ENCODE measurements at regions of chr2 and their contacts with region 1.

Region 1: GRCh38 chr2:153519257-153519875 is 40.8 kb upstream of the RPRM start:
- DNase-seq: no peak
- ATAC-seq: no peak
- H3K4me3 ChIP-seq: no peak overlapping the region
- H3K27ac ChIP-seq: no peak overlapping the region
- H3K4me1 ChIP-seq: no peaks in the 10 kb centered on the region
- H3K27me3 ChIP-seq: no peaks in the 10 kb centered on the region
- CTCF ChIP-seq: peak; percentile 71; the same call in 1 of the 2 replicates

Region 2: DNA sequence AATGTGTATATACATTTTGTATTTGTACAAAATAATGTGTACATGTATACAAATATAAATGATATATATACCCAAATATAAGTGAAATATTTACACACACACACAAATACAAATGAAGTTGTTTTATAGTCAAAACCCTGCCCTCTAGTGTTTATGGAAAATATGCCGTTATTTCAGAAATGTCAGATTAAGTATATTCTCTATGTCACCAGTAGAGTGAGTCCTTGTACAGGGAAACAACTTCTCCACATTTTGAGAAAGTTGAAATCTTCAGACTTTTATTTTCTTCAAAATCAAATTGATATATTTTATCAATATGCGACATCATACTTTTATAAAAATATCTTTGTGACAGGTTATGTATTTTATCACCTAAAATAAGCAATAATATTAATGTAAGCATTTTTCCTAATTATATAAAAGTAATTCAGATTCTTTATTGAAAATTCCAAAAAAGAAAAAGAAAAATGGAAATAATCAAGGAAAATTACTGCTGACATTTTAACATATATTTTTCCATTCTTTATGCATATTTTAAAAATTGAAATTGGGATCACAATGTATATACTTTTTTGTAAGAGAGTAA is 778.5 kb before region 1 on chr2:
- CTCF ChIA-PET with region 1: no interaction called
- POLR2A ChIA-PET with region 1: no interaction called
- in situ Hi-C with region 1: no loop called
- intact Hi-C with region 1: loop called (anchors 5 kb)
- DNase-seq: peak; percentile 42
- ATAC-seq: no peak
- H3K4me3 ChIP-seq: no peak overlapping the region
- H3K27ac ChIP-seq: no peak overlapping the region
- H3K4me1 ChIP-seq: no peaks in the 10 kb centered on the region
- H3K27me3 ChIP-seq: no peaks in the 10 kb centered on the region
- CTCF ChIP-seq: peak; percentile 73; the same call in 1 of the 2 replicates

Region 3: GRCh38 chr2:152925547-152926327 is 593.6 kb before region 1 on chr2:
- CTCF ChIA-PET with region 1: no interaction called
- POLR2A ChIA-PET with region 1: no interaction called
- in situ Hi-C with region 1: no loop called
- intact Hi-C with region 1: loop called (anchors 5 kb)
- DNase-seq: peak; percentile 55
- ATAC-seq: peak; percentile 88
- H3K4me3 ChIP-seq: no peak overlapping the region
- H3K27ac ChIP-seq: no peak overlapping the region
- H3K4me1 ChIP-seq: no peaks in the 10 kb centered on the region
- H3K27me3 ChIP-seq: no peaks in the 10 kb centered on the region
- CTCF ChIP-seq: peak; percentile 81

Region 4: DNA sequence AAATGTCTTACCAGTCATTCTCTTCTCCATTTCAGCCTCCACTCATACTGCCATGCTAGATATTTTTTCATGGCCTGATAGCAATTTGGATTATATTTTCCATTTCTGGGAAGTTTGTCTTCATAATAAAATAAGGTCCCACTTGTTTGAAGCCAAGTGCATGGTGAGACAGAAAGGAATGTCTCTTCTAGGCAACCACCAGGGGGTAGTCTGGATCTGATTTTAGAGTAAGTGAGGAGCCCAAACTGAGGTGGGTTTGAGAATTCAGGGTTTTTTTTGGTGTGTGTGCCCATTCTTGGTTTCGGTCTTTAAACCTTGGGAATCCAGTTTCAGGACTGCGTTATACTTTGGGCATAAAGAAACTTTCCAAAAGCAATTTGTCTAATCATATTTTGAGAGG is 356.3 kb before region 1 on chr2:
- CTCF ChIA-PET with region 1: no interaction called
- POLR2A ChIA-PET with region 1: no interaction called
- in situ Hi-C with region 1: no loop called
- intact Hi-C with region 1: loop called (anchors 1 kb)
- DNase-seq: peak; percentile 15
- ATAC-seq: no peak
- H3K4me3 ChIP-seq: no peak overlapping the region
- H3K27ac ChIP-seq: no peak overlapping the region
- H3K4me1 ChIP-seq: no peaks in the 10 kb centered on the region
- H3K27me3 ChIP-seq: no peaks in the 10 kb centered on the region
- CTCF ChIP-seq: peak; percentile 56

Region 5: DNA sequence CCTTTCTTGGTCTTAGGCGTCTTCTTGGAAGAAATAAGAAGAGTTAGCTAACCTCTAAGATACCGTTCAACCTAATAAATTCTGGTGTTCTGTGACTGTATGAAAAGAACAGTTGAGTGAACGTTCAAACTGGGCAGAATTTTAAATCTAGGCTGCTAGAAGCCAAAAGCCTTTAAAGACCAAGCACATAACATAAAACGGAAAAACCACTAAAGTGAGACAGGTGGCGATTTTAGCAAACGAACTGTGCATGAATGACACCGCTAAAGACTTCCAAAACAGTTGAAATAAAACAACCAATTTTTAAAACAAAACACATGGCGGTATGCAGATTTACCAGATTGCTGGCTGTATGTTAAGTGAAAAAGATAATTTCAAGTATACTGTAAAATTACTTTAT is 425.4 kb after region 1 on chr2:
- CTCF ChIA-PET with region 1: no interaction called
- POLR2A ChIA-PET with region 1: no interaction called
- in situ Hi-C with region 1: no loop called
- intact Hi-C with region 1: no loop called
- DNase-seq: no peak
- ATAC-seq: no peak
- H3K4me3 ChIP-seq: no peak overlapping the region
- H3K27ac ChIP-seq: no peak overlapping the region
- H3K4me1 ChIP-seq: no peaks in the 10 kb centered on the region
- H3K27me3 ChIP-seq: no peaks in the 10 kb centered on the region
- CTCF ChIP-seq: no peak

Region 6: GRCh38 chr2:154067124-154067523 is 547.8 kb after region 1 on chr2:
- CTCF ChIA-PET with region 1: no interaction called
- POLR2A ChIA-PET with region 1: no interaction called
- in situ Hi-C with region 1: no loop called
- intact Hi-C with region 1: no loop called
- DNase-seq: no peak
- ATAC-seq: no peak
- H3K4me3 ChIP-seq: no peak overlapping the region
- H3K27ac ChIP-seq: no peak overlapping the region
- H3K4me1 ChIP-seq: no peaks in the 10 kb centered on the region
- H3K27me3 ChIP-seq: no peaks in the 10 kb centered on the region
- CTCF ChIP-seq: no peak

Measured in Panc1 (cell line).